Heart left ventricle (tissue), 16 donors: ENCODE measurements at regions of chr1 and their contacts with region 1.

Region 1: DNA sequence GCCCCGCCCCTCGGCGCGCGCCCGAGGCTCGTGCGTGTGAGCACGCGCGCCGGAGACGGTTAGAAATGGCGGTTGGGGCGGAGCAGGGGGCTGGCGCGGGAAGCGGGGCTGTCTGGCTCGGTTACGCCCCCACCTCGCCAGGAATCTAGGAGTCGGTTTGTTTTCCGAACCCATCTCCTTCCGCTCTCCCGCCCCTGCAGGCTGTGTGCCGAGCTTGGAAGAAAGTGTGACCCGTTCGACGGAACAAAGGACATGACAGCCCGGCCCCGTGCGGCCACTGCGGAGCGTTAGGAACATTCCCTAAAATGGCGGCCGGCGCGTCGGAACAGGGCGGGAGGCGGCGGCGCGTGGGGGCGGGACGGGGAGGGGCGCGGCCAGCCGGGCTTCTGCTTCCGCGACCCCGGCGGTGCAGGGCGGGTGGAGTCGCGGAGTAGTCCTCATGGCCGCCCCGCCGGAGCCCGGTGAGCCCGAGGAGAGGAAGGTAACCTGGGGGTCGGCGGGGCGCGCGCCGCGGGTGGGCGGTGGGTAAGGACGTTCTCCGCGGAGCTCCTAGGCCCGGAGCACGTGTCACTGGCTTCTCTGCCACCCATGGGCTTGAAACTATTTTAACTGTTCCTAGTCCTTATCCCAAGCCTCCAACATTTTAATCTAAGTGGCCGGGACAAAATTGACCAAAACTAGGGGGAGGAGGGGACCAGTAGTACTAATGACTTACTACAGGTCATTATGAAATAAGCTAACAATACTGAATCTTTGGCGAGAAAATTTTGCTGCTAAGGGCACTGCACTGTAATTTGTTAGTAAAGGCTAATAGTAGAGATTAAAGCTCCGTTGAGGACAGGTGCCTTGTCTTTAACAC is at the start of gene COX20:
- DNase-seq: peak; percentile 92 to 94 (median 93)
- ATAC-seq: peak; percentile 80 to 93 (median 87)
- H3K4me3 ChIP-seq: peak within 1 kb of the TSS; percentile 48 to 86 (median 78)
- H3K27ac ChIP-seq: peak within 1 kb of the TSS; percentile 96 to 100 (median 98)
- H3K4me1 ChIP-seq: peaks cover 3 to 53% (median 26%) of the 10 kb centered on the region in 12 donors
- H3K27me3 ChIP-seq: no peaks in the 10 kb centered on the region
- CTCF ChIP-seq: peak in 2 of 12 donors; percentile 13 to 29
- POLR2A ChIP-seq: peak in 1 of 2 donors; percentile 33
- total RNA-seq, gene COX20: 43.5 to 77.4 (median 59.8) TPM

Region 2: DNA sequence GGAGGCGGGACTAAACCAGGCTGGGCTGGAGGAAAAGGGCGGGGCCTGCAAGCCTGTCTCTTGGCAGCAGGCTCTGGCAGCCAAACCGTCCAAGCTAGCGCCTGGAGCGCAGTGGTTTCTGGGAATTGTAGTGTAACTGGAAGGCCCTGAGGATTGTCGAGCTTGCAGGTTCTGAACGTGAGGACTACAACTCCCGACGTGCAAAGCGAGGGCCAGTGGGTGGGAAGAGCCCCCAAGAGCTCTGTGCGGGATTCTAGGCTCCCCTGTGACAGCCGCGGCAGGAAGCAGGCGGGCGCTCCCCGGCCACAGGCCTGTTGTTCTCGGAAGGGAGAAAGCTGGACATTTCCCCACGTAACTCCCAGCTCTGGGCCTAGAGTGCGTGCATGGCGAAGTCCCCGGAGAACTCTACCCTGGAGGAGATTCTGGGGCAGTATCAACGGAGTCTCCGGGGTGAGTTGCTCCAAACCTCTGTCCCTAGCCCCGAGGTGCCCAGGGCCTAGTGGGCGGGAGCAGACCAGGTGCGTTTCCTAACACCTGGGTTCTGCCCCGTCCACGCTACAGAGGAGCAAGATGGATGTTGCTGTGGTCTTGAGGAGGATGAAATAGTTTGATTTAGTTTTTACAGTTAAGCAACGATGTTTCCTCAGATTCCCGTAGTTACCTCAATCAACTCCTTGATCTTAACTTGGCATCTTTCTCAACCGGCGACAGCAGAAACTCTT is 1579.6 kb before region 1 on chr1 and contains the start of gene SDCCAG8:
- intact Hi-C with region 1: loop called in 1 of 10 experiments (anchors 10 kb)
- DNase-seq: peak; percentile 96 to 99 (median 99)
- ATAC-seq: peak; percentile 93 to 96 (median 96)
- H3K4me3 ChIP-seq: peak within 1 kb of the TSS; percentile 72 to 100 (median 84)
- H3K27ac ChIP-seq: peak within 1 kb of the TSS; percentile 93 to 98 (median 96)
- H3K4me1 ChIP-seq: peaks cover 0 to 66% (median 34%) of the 10 kb centered on the region in 12 donors
- H3K27me3 ChIP-seq: no peaks in the 10 kb centered on the region
- CTCF ChIP-seq: no peak
- POLR2A ChIP-seq: peak in 1 of 2 donors; percentile 87
- total RNA-seq, gene SDCCAG8: 16.7 to 36.6 (median 23.6) TPM

Region 3: GRCh38 chr1:244796718-244797406 is 38.6 kb before region 1 on chr1:
- intact Hi-C with region 1: loop called in 1 of 10 experiments (anchors 2 kb)
- DNase-seq: peak in 4 of 5 donors; percentile 35 to 60 (median 46)
- ATAC-seq: peak in 3 of 4 donors; percentile 58 to 68 (median 63)
- H3K4me3 ChIP-seq: no peak overlapping the region
- H3K27ac ChIP-seq: no peak overlapping the region
- H3K4me1 ChIP-seq: peaks cover 0 to 4% (median 0%) of the 10 kb centered on the region in 12 donors
- H3K27me3 ChIP-seq: no peaks in the 10 kb centered on the region
- CTCF ChIP-seq: peak; percentile 79 to 91 (median 88)
- POLR2A ChIP-seq: no peak

Region 4: GRCh38 chr1:244857761-244858160 is 22.3 kb after region 1 on chr1:
- intact Hi-C with region 1: loop called in 2 of 10 experiments (anchors 2 kb)
- DNase-seq: no peak
- ATAC-seq: no peak
- H3K4me3 ChIP-seq: no peak overlapping the region
- H3K27ac ChIP-seq: peak overlapping the region in 1 of 12 donors; percentile 2
- H3K4me1 ChIP-seq: peaks cover 3 to 95% (median 57%) of the 10 kb centered on the region in 12 donors
- H3K27me3 ChIP-seq: no peaks in the 10 kb centered on the region
- CTCF ChIP-seq: no peak
- POLR2A ChIP-seq: no peak

Region 5: DNA sequence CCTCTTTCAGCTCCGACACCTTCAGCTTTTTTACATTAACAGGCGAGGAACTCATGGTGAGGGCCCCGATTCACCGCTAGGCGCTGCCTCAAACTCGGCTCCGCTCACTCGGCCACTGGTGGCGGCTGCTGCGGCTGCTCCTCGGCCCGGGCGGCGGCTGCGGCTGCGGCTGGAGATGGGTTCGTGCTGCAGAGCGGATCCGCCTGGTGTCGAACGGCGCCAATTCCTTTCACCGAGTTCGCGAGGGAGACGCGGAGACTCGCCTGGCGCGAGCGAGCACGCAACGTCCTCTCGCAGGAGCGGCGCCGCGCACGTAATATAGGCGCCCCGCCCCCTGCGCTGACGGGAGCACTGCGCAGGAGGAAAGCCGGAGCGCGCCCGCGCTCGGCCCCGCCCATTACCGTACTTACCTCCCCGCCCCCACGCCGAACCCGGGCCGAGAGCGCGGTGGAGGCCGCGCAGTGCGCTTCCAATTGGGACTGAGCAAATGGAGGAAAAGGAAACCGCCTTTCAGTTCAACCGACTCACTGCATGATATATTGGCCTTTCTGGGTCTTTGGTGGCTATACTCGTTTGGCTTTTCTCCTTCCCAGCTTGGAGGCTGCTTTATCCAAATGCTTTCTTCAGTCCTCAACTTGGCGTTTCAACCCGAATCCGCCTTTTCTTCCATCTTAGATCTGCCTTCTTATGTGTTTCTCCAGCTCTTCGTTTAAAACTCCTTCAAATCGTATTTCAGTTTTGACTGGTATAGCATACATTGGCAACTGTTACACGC is 28.9 kb after region 1 on chr1 and contains the start of gene HNRNPU:
- intact Hi-C with region 1: loop called in 9 of 10 experiments (anchors 1 to 2 kb)
- DNase-seq: peak; percentile 97 to 99 (median 98)
- ATAC-seq: peak; percentile 89 to 96 (median 93)
- H3K4me3 ChIP-seq: peak within 1 kb of the TSS; percentile 88 to 100 (median 96)
- H3K27ac ChIP-seq: peak within 1 kb of the TSS; percentile 94 to 100 (median 100)
- H3K4me1 ChIP-seq: peaks cover 5 to 47% (median 40%) of the 10 kb centered on the region in 12 donors
- H3K27me3 ChIP-seq: no peaks in the 10 kb centered on the region
- CTCF ChIP-seq: peak in 7 of 12 donors; percentile 5 to 38 (median 32)
- POLR2A ChIP-seq: peak; percentile 75 to 97
- total RNA-seq, gene HNRNPU: 138 to 218 (median 169) TPM

Region 6: DNA sequence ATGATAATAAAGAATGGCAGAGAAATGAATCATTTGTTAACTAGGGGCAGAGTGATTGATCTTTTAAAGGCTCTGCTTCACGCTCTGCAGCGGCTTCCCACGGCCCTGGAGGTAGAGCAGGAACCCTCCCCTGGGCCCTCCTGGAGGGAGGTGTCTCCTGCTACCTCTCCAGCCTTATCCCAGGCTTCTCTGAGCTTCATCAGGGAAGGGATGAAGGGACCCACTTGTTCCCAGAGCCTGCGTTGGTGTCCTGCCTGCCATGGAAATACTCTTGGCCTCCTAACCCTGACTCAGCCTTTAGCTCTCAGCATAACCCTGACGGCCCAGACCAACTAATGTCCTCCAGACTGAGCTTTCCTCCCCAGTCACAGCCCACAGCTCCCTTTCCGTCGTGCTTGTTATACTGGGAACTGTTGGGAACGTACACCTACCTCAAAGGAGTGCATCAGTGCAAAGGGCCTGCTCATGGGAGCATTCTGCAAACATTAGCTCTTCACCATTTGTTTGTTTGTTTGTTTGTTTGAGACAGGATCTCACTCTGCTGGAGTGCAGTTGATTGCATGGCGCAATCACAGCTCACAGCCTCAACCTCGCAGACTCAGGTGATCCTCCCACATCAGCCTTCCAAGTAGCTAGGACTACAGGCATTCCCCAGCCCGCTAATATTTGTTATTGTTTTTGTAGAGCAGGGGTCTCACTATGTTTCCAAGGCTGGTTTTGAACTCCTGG is 46.2 kb after region 1 on chr1:
- intact Hi-C with region 1: no loop called
- DNase-seq: no peak
- ATAC-seq: no peak
- H3K4me3 ChIP-seq: no peak overlapping the region
- H3K27ac ChIP-seq: no peak overlapping the region
- H3K4me1 ChIP-seq: no peaks in the 10 kb centered on the region
- H3K27me3 ChIP-seq: no peaks in the 10 kb centered on the region
- CTCF ChIP-seq: no peak
- POLR2A ChIP-seq: no peak

Region 7: GRCh38 chr1:244970661-244971551 is 135.4 kb after region 1 on chr1:
- intact Hi-C with region 1: loop called in 9 of 10 experiments (anchors 1 to 10 kb)
- DNase-seq: peak; percentile 93 to 97 (median 95)
- ATAC-seq: peak; percentile 80 to 93 (median 90)
- H3K4me3 ChIP-seq: peak overlapping the region; percentile 68 to 95 (median 76)
- H3K27ac ChIP-seq: peak overlapping the region; percentile 97 to 100 (median 99)
- H3K4me1 ChIP-seq: peaks cover 0 to 24% (median 17%) of the 10 kb centered on the region in 12 donors
- H3K27me3 ChIP-seq: no peaks in the 10 kb centered on the region
- CTCF ChIP-seq: peak; percentile 43 to 83 (median 58)
- POLR2A ChIP-seq: peak in 1 of 2 donors; percentile 58